ENCODE measurements at regions of chr6 and their contacts with region 1.

Region 1: GRCh38 chr6:13668291-13668928 is 43.2 kb downstream of the RANBP9 start:
- DNase-seq: no peak
- H3K4me3 Mint-ChIP-seq: no peak overlapping the region
- H3K27ac Mint-ChIP-seq: peak overlapping the region; percentile 68
- H3K4me1 Mint-ChIP-seq: peaks cover 86% of the 10 kb centered on the region
- H3K27me3 Mint-ChIP-seq: no peaks in the 10 kb centered on the region

Region 2: GRCh38 chr6:13630499-13630898 is 37.9 kb before region 1 on chr6:
- CTCF ChIA-PET with region 1: no interaction called
- POLR2A ChIA-PET with region 1: no interaction called
- intact Hi-C with region 1: loop called (anchors 2 kb)
- DNase-seq: no peak
- H3K4me3 Mint-ChIP-seq: no peak overlapping the region
- H3K27ac Mint-ChIP-seq: peak overlapping the region; percentile 71
- H3K4me1 Mint-ChIP-seq: peaks cover 45% of the 10 kb centered on the region
- H3K27me3 Mint-ChIP-seq: no peaks in the 10 kb centered on the region

Region 3: DNA sequence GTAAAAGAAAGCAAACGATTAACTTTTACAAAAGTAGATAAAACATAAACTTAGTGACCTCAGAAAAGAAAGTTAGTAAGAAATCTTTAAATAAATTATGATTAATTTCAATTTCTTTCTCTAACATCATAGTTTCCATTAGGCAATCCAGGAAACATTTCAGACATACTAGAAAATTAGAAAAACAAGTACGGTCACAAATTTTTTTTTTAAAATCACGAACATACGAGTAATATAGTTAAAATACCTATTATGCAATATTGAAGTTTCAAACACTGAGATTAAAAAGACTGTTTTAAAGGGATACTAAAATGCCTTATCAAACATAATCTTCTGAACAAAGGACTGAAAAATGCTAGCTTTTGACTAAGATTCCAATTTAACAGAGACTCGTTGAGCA is 27.1 kb before region 1 on chr6:
- CTCF ChIA-PET with region 1: no interaction called
- POLR2A ChIA-PET with region 1: no interaction called
- intact Hi-C with region 1: loop called (anchors 2 kb)
- DNase-seq: no peak
- H3K4me3 Mint-ChIP-seq: no peak overlapping the region
- H3K27ac Mint-ChIP-seq: peak overlapping the region; percentile 76
- H3K4me1 Mint-ChIP-seq: peaks cover 36% of the 10 kb centered on the region
- H3K27me3 Mint-ChIP-seq: no peaks in the 10 kb centered on the region

Region 4: GRCh38 chr6:13681305-13682061 is 13.1 kb after region 1 on chr6:
- CTCF ChIA-PET with region 1: no interaction called
- POLR2A ChIA-PET with region 1: no interaction called
- intact Hi-C with region 1: loop called (anchors 2 kb)
- DNase-seq: no peak
- H3K4me3 Mint-ChIP-seq: peak overlapping the region; percentile 60
- H3K27ac Mint-ChIP-seq: peak overlapping the region; percentile 86
- H3K4me1 Mint-ChIP-seq: peaks cover 52% of the 10 kb centered on the region
- H3K27me3 Mint-ChIP-seq: no peaks in the 10 kb centered on the region

Measured in activated CD4-positive, alpha-beta memory T cell treated with anti-CD3 and anti-CD28 coated beads for 36 hours (primary cell).